A549 (cell line): ENCODE measurements at regions of chr20 and their contacts with region 1.

Region 1: GRCh38 chr20:62386383-62387218 is at the start of gene RPS21:
- DNase-seq: peak in 1 of 2 experiments; percentile 93
- ATAC-seq: peak; percentile 78 to 87
- H3K4me3 ChIP-seq: peak within 1 kb of the TSS; percentile 94
- H3K27ac ChIP-seq: peak within 1 kb of the TSS; percentile 88 to 97
- H3K4me1 ChIP-seq: peaks cover 33% of the 10 kb centered on the region
- CTCF ChIP-seq: no peak
- EP300 ChIP-seq: no peak
- POLR2A ChIP-seq: peak; percentile 77
- RAD21 ChIP-seq: 0 out of 5 replicates have a peak, but pooled peaks of 1 of the 2 experiments have one; percentile 13
- polyA plus RNA-seq, gene RPS21: 3,697 and 4,026 TPM in 2 replicates

Region 2: DNA sequence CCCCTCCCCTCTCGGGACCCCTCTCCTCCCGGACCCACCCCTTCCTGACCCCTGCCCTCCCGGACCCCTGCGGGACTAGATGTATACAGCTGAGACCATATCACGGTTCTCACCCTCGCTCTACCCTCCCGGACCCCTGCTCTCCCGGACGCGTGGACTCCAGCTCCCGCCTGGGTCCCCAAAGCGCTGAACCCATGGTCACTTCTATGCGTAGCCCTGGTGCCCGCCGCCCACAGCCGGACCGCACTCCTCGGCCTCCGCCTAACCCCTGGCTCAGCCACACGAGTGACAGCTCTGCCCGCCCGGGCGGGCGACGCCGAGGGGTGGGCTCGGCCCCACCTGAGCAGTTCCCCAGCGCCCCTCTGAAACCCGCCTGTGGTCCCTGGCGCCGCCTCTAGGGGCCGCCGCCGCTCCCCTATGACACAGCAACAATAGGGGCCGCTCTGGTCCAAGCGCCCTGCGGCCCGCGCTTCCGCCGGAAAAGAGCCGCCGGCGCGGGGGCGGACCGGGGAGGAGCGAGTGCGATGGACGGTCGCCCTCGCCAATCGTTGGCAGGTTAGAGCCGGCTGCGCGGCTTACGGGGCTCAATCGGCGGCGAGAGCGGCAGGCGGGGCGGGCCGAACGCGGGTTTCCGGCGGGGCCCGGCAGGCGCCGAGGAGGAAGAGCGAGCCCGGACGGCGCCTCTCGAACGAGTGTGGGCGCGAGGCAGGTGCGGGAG is 84.1 kb before region 1 on chr20 and contains the start of gene ADRM1:
- CTCF ChIA-PET with region 1: interaction called, 93 read pairs
- POLR2A ChIA-PET with region 1: interaction called, 6 read pairs
- DNase-seq: peak; percentile 95 to 97
- ATAC-seq: peak; percentile 50 to 83
- H3K4me3 ChIP-seq: peak within 1 kb of the TSS; percentile 99
- H3K27ac ChIP-seq: peak within 1 kb of the TSS; percentile 97 to 99
- H3K4me1 ChIP-seq: peaks cover 34% of the 10 kb centered on the region
- CTCF ChIP-seq: peak; percentile 81
- EP300 ChIP-seq: no peak
- POLR2A ChIP-seq: peak; percentile 43
- RAD21 ChIP-seq: peak; percentile 48
- polyA plus RNA-seq, gene ADRM1: 68.9 and 87.9 TPM in 2 replicates

Region 3: GRCh38 chr20:62323980-62324906 is 62.4 kb before region 1 on chr20:
- CTCF ChIA-PET with region 1: interaction called, 29 read pairs
- POLR2A ChIA-PET with region 1: no interaction called
- DNase-seq: no peak
- ATAC-seq: no peak
- H3K4me3 ChIP-seq: no peak overlapping the region
- H3K27ac ChIP-seq: 0 out of 6 replicates have a peak overlapping the region, but pooled peaks of 1 of the 2 experiments have one; percentile 11
- H3K4me1 ChIP-seq: peaks cover 11% of the 10 kb centered on the region; the same call in 2 of the 3 replicates
- CTCF ChIP-seq: no peak
- EP300 ChIP-seq: no peak
- POLR2A ChIP-seq: no peak
- RAD21 ChIP-seq: no peak

Region 4: DNA sequence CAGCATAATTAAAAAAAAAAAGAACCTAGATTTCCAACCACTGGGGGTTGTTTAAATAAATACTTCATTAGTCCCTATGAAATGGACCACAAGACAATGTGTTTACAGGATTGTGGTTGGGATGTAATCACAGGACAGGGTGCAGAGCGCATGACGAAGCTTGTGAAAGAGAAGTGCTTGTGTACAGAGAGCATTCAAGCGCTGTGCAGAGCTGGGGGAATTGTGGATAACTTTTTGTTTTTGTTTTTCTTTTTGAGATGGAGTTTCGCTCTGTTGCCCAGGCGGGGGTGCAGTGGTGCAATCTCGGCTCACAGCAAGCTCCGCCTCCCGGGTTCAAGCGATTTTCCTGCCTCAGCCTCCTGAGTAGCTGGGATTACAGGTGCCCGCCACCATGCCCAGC is 41.8 kb before region 1 on chr20:
- CTCF ChIA-PET with region 1: interaction called, 42 read pairs
- POLR2A ChIA-PET with region 1: interaction called, 10 read pairs
- DNase-seq: no peak
- ATAC-seq: no peak
- H3K4me3 ChIP-seq: no peak overlapping the region
- H3K27ac ChIP-seq: no peak overlapping the region
- H3K4me1 ChIP-seq: peaks cover 2% of the 10 kb centered on the region
- CTCF ChIP-seq: no peak
- EP300 ChIP-seq: no peak
- POLR2A ChIP-seq: no peak
- RAD21 ChIP-seq: no peak

Region 5: GRCh38 chr20:62357187-62357667 is 29.4 kb before region 1 on chr20:
- CTCF ChIA-PET with region 1: interaction called, 290 read pairs
- POLR2A ChIA-PET with region 1: interaction called, 4 read pairs
- DNase-seq: peak in 1 of 2 experiments; percentile 77
- ATAC-seq: peak in 1 of 2 experiments; percentile 7; a peak in 3 of 6 replicates
- H3K4me3 ChIP-seq: peak overlapping the region; percentile 41; the same call in 2 of the 3 replicates
- H3K27ac ChIP-seq: peak overlapping the region; percentile 97 to 99
- H3K4me1 ChIP-seq: peaks cover 98% of the 10 kb centered on the region
- CTCF ChIP-seq: no peak
- EP300 ChIP-seq: peak in 1 of 2 experiments; percentile 46; a peak in 1 of 5 replicates
- POLR2A ChIP-seq: 0 out of 2 replicates have a peak, but pooled peaks have one; percentile 20
- RAD21 ChIP-seq: peak in 1 of 2 experiments; percentile 12; a peak in 1 of 5 replicates

Region 6: GRCh38 chr20:62401331-62401779 is 14.8 kb after region 1 on chr20:
- CTCF ChIA-PET with region 1: interaction called, 38 read pairs
- POLR2A ChIA-PET with region 1: interaction called, 11 read pairs
- DNase-seq: peak; percentile 35 to 61
- ATAC-seq: peak in 1 of 2 experiments; percentile 64; a peak in 3 of 6 replicates
- H3K4me3 ChIP-seq: no peak overlapping the region
- H3K27ac ChIP-seq: no peak overlapping the region
- H3K4me1 ChIP-seq: peaks cover 11% of the 10 kb centered on the region
- CTCF ChIP-seq: peak; percentile 18; the same call in 1 of the 3 replicates
- EP300 ChIP-seq: no peak
- POLR2A ChIP-seq: no peak
- RAD21 ChIP-seq: no peak

Region 7: DNA sequence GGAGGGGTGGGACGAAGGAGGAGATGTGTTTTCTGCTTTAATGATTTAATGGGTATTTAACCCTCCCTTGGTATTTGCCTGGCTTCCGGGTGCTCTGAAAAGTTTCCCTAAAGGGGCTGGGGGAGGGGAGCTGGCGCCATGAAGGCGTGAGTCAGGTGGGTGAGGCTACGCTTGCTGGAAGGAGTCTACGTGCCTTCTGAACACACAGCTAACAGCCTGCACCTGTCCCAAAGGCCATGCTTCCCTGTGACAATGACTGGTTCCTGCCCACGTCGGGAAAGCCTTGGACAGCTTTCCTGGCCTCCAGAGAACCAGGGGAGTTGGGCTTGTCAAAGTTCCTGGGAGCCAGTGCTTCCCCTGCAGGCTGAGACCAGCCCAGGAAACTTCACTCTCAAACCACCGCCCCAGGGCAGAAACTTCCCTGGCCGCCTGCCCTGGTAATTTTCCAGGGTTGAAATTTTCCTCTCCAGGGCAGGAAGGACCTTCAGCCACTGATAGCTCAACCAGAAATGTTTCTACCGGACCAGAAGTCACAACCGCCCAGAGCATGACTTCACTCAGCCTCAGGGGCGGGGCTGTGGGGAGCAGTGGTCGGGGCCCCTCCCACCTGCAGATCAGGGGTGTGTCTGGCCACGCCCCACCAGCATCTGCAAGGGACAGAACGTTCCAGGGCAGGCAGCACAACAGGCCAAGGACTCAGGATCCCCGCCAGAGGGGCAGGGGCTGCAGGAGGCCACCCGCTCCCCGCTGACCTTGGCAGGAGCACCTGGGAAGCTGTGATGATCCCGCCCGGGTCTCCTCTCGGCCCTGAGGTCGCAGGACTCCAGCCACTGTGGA is 237.1 kb after region 1 on chr20:
- CTCF ChIA-PET with region 1: no interaction called
- POLR2A ChIA-PET with region 1: interaction called, 16 read pairs
- DNase-seq: peak; percentile 83 to 98
- ATAC-seq: peak; percentile 78 to 92
- H3K4me3 ChIP-seq: peak overlapping the region; percentile 14; the same call in 1 of the 3 replicates
- H3K27ac ChIP-seq: peak overlapping the region; percentile 88 to 91
- H3K4me1 ChIP-seq: peaks cover 34% of the 10 kb centered on the region
- CTCF ChIP-seq: no peak
- EP300 ChIP-seq: no peak
- POLR2A ChIP-seq: peak; percentile 48
- RAD21 ChIP-seq: no peak